Esophagus muscularis mucosa (tissue), 4 donors: ENCODE measurements at regions of chr12 and their contacts with region 1.

Region 1: GRCh38 chr12:66269757-66270383 is 32.4 kb upstream of the HELB start:
- DNase-seq: no peak
- H3K4me3 ChIP-seq: no peak overlapping the region
- H3K27ac ChIP-seq: no peak overlapping the region
- H3K4me1 ChIP-seq: no peaks in the 10 kb centered on the region
- H3K27me3 ChIP-seq: peaks cover 0 to 3% (median 0%) of the 10 kb centered on the region in 4 donors
- CTCF ChIP-seq: peak; percentile 49 to 70 (median 54)
- EP300 ChIP-seq: no peak
- POLR2A ChIP-seq: no peak

Region 2: GRCh38 chr12:65278576-65279368 is 991.1 kb before region 1 on chr12 and contains the start of gene MSRB3:
- intact Hi-C with region 1: no loop called
- DNase-seq: no peak
- H3K4me3 ChIP-seq: peak within 1 kb of the TSS; percentile 77 to 99 (median 97)
- H3K27ac ChIP-seq: peak within 1 kb of the TSS; percentile 94 to 99 (median 98)
- H3K4me1 ChIP-seq: peaks cover 31 to 49% (median 46%) of the 10 kb centered on the region in 4 donors
- H3K27me3 ChIP-seq: no peaks in the 10 kb centered on the region
- CTCF ChIP-seq: no peak
- EP300 ChIP-seq: no peak
- POLR2A ChIP-seq: peak; percentile 37
- total RNA-seq, gene MSRB3: 213 to 325 (median 288) TPM

Region 3: GRCh38 chr12:66025477-66025876 is 244.4 kb before region 1 on chr12:
- intact Hi-C with region 1: no loop called
- DNase-seq: peak; percentile 17
- H3K4me3 ChIP-seq: no peak overlapping the region
- H3K27ac ChIP-seq: no peak overlapping the region
- H3K4me1 ChIP-seq: no peaks in the 10 kb centered on the region
- H3K27me3 ChIP-seq: peaks cover 0 to 10% (median 0%) of the 10 kb centered on the region in 4 donors
- CTCF ChIP-seq: no peak
- EP300 ChIP-seq: no peak
- POLR2A ChIP-seq: no peak

Region 4: DNA sequence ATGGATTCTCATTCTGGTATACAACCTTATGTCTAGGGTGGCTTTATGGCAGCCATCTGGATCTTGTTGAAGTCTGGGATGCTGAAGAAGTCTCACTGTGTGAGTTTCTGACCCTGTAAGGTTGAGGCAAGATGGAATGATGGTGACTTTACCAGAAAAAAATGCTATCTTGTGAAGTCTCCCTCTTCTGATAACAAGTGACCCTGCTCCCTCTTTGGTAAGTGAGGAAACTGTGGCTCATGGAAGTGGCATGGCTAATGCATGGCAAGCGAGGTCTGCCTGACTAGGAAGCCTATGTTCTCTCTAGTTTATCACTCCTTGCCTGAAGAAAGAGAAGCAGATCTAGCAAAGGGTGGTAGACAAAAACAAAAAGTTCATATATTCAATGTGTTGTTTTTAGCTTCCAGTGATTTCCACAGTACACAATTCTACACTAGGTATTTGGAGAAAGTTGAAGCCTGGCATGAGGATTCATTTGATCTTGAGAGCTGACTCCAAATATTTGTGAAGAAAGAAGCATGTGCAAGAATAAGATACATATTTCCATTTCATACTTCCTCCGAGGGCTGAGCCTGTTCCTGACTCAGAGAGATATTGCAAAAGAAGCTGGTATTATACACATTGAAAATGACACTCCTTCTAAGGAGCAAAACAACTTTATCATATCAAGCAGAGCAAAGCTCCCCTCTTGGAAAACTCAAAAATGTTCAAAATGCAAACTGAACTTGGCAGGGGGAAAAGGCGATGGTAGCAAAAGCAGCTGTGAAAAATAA is 96.0 kb after region 1 on chr12:
- intact Hi-C with region 1: no loop called
- DNase-seq: no peak
- H3K4me3 ChIP-seq: no peak overlapping the region
- H3K27ac ChIP-seq: no peak overlapping the region
- H3K4me1 ChIP-seq: no peaks in the 10 kb centered on the region
- H3K27me3 ChIP-seq: no peaks in the 10 kb centered on the region
- CTCF ChIP-seq: no peak
- EP300 ChIP-seq: no peak
- POLR2A ChIP-seq: no peak

Region 5: DNA sequence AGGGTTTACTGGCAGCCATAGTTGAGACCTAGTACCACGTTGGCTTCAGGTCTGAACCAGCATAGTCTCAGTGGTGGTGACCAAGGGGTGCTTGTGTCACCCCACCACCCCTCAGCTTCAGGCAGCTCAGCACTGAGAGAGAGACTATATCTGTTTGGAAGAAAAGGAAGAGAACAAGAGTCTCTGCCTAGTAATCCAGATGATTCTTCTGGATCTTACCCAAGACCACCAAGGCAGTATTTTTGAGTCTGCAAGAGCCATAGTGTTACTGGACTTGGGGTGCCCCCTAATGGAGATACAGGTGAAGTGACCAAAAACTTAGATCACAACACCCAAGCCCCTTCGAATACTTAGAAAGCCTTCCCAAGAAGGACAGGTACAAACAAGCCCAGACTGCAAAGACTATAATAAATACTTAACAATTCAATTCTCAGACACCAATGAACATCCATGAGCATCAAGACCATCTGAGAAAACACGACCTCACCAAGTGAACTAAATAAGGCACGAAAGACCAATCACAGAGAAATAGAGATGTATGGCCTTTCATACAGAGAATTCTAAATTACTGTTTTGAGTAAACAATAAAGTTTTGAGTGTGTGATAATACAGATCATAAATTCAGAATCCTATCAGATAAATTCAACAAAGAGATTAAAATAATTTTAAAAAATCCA is 139.5 kb after region 1 on chr12:
- intact Hi-C with region 1: loop called (anchors 10 kb)
- DNase-seq: no peak
- H3K4me3 ChIP-seq: no peak overlapping the region
- H3K27ac ChIP-seq: no peak overlapping the region
- H3K4me1 ChIP-seq: no peaks in the 10 kb centered on the region
- H3K27me3 ChIP-seq: no peaks in the 10 kb centered on the region
- CTCF ChIP-seq: peak; percentile 41 to 57 (median 41)
- EP300 ChIP-seq: no peak
- POLR2A ChIP-seq: no peak

Region 6: DNA sequence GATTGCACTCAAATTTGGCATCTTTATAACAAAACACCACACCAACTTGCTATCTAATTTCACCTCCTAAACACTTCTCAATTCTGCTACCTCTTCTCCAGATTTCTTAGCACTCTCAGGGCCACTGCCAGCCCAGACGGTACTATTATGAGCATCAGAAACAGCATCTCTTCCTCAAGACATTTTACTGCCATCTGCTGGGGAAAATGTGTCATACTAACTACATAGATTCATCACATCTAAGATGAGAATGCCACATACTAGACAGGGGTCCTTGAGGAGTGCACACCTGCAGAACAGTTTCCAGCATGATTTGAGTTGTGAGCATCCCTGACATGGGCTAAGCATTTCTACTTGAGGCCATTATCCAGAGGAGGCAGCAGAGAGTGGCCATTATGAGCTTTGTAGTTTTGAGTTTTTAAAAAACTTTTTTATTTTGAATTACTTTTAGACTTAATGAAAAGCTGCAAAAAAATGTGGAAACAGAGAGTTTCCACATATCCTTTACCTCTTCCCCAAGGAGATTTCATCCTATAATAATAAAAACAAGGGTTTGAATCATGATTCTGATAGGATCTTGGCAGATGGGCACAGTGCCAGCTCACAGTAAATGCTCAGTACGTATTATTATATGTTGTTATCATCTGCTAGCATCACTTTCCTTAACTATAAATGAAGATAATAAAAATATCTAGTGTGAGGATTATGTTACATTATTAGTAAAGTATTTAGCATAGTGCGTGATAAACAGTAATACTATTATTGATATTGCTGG is 424.2 kb after region 1 on chr12:
- intact Hi-C with region 1: loop called (anchors 10 kb)
- DNase-seq: no peak
- H3K4me3 ChIP-seq: no peak overlapping the region
- H3K27ac ChIP-seq: no peak overlapping the region
- H3K4me1 ChIP-seq: no peaks in the 10 kb centered on the region
- H3K27me3 ChIP-seq: no peaks in the 10 kb centered on the region
- CTCF ChIP-seq: peak; percentile 43 to 60 (median 57)
- EP300 ChIP-seq: no peak
- POLR2A ChIP-seq: no peak

Region 7: GRCh38 chr12:66860752-66861750 is 591.2 kb after region 1 on chr12:
- intact Hi-C with region 1: loop called (anchors 10 kb)
- DNase-seq: no peak
- H3K4me3 ChIP-seq: no peak overlapping the region
- H3K27ac ChIP-seq: no peak overlapping the region
- H3K4me1 ChIP-seq: peaks cover 0 to 20% (median 17%) of the 10 kb centered on the region in 4 donors
- H3K27me3 ChIP-seq: no peaks in the 10 kb centered on the region
- CTCF ChIP-seq: peak; percentile 82 to 95 (median 89)
- EP300 ChIP-seq: no peak
- POLR2A ChIP-seq: no peak